HCT116 (cell line): ENCODE measurements at regions of chr5 and their contacts with region 1.

Region 1: DNA sequence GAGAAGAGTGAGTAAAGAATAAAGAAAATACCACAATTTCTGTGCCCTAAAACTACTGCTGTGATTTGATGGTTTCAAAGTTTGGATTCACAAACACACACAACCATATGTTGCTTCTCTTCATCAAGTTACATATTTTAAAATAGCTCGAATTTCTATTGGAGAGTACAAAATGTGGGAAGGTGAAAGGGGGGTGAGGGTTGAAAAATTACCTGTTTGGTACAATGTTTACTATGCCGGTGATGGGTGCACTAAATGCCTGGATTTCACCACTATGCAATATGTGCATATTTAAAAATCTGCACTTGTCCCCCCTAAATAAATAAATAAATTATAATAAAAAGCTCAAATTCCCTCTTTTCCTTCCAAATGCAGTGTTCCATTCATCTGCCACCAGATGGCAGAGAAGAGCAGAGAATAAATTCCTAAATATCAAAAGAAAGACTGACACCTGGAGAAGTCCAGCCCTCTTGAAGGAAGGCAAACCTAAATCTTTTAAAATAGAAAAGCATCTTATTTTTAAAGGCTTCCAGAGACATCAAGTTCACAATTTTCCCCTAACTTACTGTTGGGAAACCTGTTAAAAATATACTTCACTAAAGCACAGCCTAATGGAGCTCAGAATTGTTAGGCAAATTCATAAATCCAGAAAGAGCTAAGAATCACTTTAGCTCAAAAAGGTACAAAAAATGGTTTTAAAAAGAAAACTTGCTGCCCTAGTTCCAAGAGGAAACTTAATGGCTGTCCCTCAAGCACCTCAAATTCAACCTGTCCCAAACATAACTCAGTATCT is 24.8 kb upstream of the HNRNPA0 start:
- DNase-seq: peak; percentile 44
- ATAC-seq: peak; percentile 74
- H3K4me3 ChIP-seq: no peak overlapping the region
- H3K27ac ChIP-seq: no peak overlapping the region
- H3K4me1 ChIP-seq: no peaks in the 10 kb centered on the region
- H3K27me3 ChIP-seq: no peaks in the 10 kb centered on the region
- CTCF ChIP-seq: peak; percentile 58 to 91 (median 67)
- POLR2A ChIP-seq: no peak
- RAD21 ChIP-seq: peak; percentile 82

Region 2: DNA sequence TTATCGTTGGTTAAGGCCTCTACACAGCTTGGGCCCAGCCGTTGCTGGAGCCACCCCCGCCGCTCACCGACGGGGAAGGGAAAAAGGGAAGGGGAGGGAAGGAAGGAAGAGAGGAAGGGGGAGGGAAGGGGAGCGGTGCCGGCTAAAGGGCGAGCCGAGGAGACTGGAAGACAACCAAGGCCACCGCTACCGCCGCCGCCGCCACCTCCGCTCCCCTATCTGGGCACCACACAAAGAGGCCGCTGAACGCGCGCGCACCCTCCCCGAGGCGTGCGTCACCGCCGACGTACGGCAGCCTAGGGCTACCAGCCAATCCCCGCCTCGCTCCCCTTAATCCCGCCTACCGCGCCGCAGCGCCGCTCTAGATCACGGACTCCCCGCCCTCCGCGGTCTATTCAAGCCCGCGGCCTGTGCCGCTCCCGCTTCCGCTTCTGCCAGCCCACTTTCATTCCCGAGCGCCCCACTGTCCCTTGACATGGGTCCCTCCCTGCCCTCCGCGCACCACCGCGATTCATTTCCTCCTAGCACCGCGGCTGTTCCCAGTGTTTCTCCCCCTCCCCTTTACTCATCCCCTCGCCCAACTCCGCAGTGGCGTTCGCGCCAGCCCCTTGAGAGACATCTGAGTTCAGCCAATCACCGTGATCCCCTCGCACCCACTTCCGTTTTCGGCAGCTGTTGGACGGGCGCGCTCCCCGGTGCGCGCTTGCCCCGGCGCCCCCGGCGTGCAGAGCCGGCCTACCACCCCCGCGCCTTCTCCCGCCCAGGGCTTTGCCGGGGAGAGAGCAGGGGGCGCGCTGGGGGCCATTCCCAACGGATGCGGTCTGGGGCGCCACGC is 24.6 kb before region 1 on chr5 and contains the start of gene HNRNPA0:
- CTCF ChIA-PET with region 1: interaction called, 11 read pairs
- POLR2A ChIA-PET with region 1: no interaction called
- RAD21 ChIA-PET with region 1: no interaction called
- intact Hi-C with region 1: no loop called
- DNase-seq: peak; percentile 95
- ATAC-seq: peak; percentile 89
- H3K4me3 ChIP-seq: peak within 1 kb of the TSS; percentile 87 to 97
- H3K27ac ChIP-seq: peak within 1 kb of the TSS; percentile 91
- H3K4me1 ChIP-seq: peaks cover 0 to 20% of the 10 kb centered on the region in 2 experiments; a peak in 2 of 4 replicates
- H3K27me3 ChIP-seq: no peaks in the 10 kb centered on the region
- CTCF ChIP-seq: no peak
- POLR2A ChIP-seq: peak; percentile 89
- RAD21 ChIP-seq: no peak
- total RNA-seq, gene HNRNPA0: 38.9 TPM

Region 3: DNA sequence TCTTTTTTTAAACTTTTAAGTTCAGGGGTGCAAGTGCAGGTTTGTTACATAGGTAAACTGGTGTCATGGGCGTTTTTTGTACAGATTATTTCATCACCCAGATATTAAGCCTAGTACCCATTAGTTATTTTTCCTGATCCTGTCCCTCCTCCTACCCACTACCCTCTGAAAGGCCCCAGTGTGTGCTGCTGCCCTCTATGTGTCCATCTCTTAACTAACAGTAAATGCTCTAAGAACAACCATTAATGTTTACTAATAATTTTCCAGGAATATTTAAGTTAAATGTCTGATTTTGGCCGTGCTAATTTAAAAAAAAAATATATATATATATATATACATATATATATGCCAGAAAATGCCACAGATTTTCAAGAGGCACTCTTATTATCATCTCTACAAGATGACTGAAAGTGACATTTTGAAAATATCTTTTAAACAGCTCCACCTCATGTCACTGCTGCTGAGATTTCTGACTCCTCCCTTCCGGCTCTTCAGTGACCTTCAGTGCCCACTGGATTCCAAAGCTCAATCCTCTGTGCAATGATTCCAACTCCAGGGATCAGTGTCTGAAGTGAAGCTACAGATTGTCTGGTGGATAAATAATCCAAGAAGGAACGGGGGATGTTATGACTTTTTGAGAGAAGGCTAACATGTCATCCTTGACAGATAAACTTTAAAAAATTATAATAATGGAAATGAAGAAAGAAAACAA is 21.9 kb after region 1 on chr5:
- CTCF ChIA-PET with region 1: interaction called, 17 read pairs
- POLR2A ChIA-PET with region 1: no interaction called
- RAD21 ChIA-PET with region 1: no interaction called
- intact Hi-C with region 1: no loop called
- DNase-seq: no peak
- ATAC-seq: peak; percentile 70
- H3K4me3 ChIP-seq: no peak overlapping the region
- H3K27ac ChIP-seq: no peak overlapping the region
- H3K4me1 ChIP-seq: peaks cover 2 to 5% of the 10 kb centered on the region in 2 experiments; a peak in 2 of 4 replicates
- H3K27me3 ChIP-seq: no peaks in the 10 kb centered on the region
- CTCF ChIP-seq: peak in 1 of 3 experiments; percentile 17; a peak in 1 of 6 replicates
- POLR2A ChIP-seq: no peak
- RAD21 ChIP-seq: no peak; the same call in 1 of the 2 replicates

Region 4: DNA sequence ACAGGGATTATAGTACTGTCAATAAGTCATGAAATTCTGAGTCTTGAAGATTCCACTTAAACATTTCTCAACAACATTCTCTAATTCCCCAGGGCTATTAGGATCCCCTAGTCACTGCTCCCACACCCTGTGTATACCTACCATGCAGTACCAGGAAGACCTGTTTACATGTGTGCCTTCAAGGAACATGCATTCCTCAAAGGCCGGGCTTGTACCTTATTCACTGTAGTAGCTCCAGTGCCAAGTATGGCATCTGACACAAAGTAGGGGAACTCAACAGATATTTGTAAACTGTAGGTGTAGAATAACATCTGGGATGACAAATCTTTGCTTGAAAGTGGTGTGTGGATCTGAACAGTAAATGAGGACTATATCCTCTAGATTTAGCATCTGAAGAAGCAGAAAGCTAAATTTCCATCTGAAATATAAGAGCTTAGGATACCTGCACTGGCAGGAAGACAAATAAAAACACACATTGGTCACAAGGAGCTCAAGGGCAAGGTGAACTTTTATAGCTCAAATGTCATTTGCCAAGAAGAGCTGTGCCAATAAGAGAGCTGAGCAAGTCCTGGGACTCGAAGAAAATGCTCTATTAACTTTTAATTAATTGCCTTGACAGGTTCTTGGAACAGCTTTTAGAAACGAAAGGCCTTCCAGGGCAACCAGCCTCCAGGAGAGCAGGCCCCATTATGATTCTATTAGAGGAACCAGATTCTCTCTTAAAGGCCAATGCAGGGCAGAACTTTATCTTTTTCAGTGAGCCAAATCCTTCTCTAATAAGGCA is 36.4 kb after region 1 on chr5:
- CTCF ChIA-PET with region 1: interaction called, 10 read pairs
- POLR2A ChIA-PET with region 1: no interaction called
- RAD21 ChIA-PET with region 1: interaction called in 1 of 2 experiments, 3 read pairs
- intact Hi-C with region 1: no loop called
- DNase-seq: no peak
- ATAC-seq: no peak
- H3K4me3 ChIP-seq: no peak overlapping the region
- H3K27ac ChIP-seq: no peak overlapping the region
- H3K4me1 ChIP-seq: 0 out of 4 replicates have a peak, but pooled peaks cover 0 to 4% of the 10 kb centered on the region in 2 experiments
- H3K27me3 ChIP-seq: no peaks in the 10 kb centered on the region
- CTCF ChIP-seq: no peak
- POLR2A ChIP-seq: no peak
- RAD21 ChIP-seq: no peak

Region 5: DNA sequence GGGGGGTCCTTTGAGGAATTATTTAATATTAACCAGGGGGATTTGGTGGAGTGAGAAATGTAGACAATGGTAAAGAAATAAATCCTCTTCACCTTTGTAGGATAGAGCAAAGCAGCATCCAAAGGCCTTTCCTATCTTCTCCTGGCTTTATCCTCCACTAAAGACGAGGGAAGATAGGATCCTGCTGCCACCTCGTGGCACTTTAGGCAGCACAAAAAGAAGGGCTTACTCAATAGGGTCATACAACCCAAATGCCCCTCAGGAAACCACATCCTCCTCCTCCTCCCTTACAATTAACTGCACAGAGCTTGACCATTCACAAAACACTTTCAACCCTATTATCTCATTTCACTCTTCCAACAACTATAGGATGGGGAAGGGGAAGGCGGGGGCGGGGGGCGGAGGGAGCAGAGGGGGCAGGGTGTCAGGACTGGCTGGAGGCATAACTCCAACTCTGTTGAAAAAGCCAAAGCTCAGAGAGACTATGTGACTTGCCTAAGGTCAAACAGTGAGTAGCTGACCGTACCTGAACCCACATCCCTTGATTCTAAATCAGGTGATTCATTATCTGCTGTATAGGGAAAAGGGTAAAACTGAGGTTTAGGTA is 43.3 kb after region 1 on chr5:
- CTCF ChIA-PET with region 1: interaction called, 16 read pairs
- POLR2A ChIA-PET with region 1: no interaction called
- RAD21 ChIA-PET with region 1: no interaction called
- intact Hi-C with region 1: loop called (anchors 1 kb)
- DNase-seq: peak; percentile 40
- ATAC-seq: peak; percentile 90
- H3K4me3 ChIP-seq: no peak overlapping the region
- H3K27ac ChIP-seq: no peak overlapping the region
- H3K4me1 ChIP-seq: 0 out of 4 replicates have a peak, but pooled peaks cover 0 to 4% of the 10 kb centered on the region in 2 experiments
- H3K27me3 ChIP-seq: no peaks in the 10 kb centered on the region
- CTCF ChIP-seq: peak; percentile 47 to 66 (median 59); a peak in 5 of 6 replicates
- POLR2A ChIP-seq: no peak
- RAD21 ChIP-seq: peak; percentile 78

Region 6: DNA sequence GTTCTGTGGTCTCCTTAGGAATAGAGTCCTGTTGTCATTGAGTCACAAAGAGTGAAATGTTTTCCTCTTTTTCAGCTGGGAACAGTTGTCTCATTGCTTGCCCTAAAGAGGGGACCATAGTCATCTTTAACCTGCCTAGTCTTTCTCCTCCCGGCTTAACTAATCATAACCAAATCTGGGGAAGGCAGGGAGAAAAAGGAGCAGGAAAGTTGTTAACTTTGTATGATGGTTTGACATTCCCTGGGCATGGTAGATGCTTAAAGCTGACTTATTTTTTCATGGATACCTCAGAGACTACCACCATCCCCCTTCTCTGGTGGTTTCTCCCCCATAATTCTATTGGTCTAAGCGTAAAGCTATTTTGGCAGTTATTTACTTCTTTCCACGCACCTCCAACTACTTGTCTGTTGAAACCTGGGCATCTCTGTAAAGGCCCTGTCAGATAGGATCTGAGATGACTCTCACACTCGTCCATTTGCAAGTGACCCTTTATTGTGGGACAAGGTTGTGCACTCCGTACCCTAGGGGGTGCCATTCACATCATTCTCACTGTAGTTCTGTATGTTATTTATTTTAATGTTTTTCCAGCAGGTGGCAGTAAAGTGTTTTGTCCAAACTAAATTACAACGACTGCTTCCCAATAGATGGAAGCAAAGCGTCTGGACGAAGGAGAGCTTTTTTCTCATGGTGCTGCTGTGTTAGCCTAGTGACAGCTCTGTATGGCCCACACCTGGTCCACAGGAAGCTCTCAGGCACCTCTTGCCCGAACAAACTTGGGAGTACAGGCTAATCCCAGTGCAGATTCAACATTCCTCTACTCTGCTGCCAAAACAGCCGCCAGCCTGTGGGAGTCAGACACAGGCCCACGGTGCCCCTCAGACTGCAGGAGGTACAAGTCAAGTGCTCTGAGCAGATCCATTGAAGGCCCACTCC is 256.9 kb after region 1 on chr5:
- CTCF ChIA-PET with region 1: interaction called, 12 read pairs
- POLR2A ChIA-PET with region 1: no interaction called
- RAD21 ChIA-PET with region 1: interaction called in 1 of 2 experiments, 4 read pairs
- intact Hi-C with region 1: no loop called
- DNase-seq: peak; percentile 90
- ATAC-seq: peak; percentile 72
- H3K4me3 ChIP-seq: no peak overlapping the region
- H3K27ac ChIP-seq: no peak overlapping the region
- H3K4me1 ChIP-seq: peaks cover 12 to 34% of the 10 kb centered on the region in 2 experiments
- H3K27me3 ChIP-seq: no peaks in the 10 kb centered on the region
- CTCF ChIP-seq: peak; percentile 78 to 99 (median 98)
- POLR2A ChIP-seq: no peak
- RAD21 ChIP-seq: peak; percentile 90

Region 7: GRCh38 chr5:138065102-138065501 is 286.1 kb after region 1 on chr5:
- CTCF ChIA-PET with region 1: interaction called, 24 read pairs
- POLR2A ChIA-PET with region 1: no interaction called
- RAD21 ChIA-PET with region 1: no interaction called
- intact Hi-C with region 1: loop called (anchors 2 kb)
- DNase-seq: no peak
- ATAC-seq: peak; percentile 74
- H3K4me3 ChIP-seq: no peak overlapping the region
- H3K27ac ChIP-seq: no peak overlapping the region
- H3K4me1 ChIP-seq: no peaks in the 10 kb centered on the region
- H3K27me3 ChIP-seq: no peaks in the 10 kb centered on the region
- CTCF ChIP-seq: peak; percentile 49 to 72 (median 62); a peak in 5 of 6 replicates
- POLR2A ChIP-seq: no peak
- RAD21 ChIP-seq: peak; percentile 32